Body of pancreas (tissue), 4 donors: ENCODE measurements at regions of chr11 and their contacts with region 1.

Region 1: DNA sequence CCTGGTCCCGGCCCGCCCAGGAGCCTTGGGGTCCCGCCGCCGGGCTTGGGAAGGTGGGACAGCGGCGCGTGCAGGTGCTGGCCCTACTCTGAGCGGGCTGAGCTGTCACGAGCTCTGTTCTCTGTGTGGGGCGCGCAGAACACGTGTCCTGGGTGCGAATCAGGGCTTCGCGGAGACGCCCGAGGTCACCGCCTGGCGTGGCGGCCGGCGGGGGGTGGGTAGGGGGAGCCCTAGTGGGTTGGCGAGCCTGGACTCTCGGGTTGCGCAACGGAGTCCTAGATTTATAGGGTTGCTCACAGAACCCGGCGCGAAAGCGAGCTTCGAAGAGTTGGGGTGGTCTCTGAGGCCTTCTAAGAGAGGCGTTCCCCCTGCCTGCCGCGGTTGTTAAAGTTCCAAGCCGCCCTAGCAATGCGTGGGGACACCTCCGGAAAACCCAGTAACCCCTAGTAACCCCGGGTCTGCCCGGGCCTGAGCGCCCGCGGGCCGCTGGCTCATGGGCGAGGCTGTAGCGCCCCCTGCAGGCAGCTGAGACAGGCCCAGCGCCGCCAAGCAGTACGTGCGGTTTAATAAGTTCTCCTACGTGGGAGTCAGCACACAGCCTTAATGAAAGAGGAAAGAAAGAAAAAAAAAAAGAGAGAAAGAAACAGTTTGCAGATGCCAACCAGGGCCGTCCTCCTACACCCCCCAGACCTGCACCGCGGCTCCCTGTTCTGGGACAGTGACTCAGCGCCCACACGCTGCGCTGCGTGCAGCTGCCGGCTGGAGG is 2.8 kb downstream of the ADM start:
- DNase-seq: peak; percentile 81 to 83 (median 83)
- ATAC-seq: peak; percentile 68
- H3K4me3 ChIP-seq: no peak overlapping the region
- H3K27ac ChIP-seq: peak overlapping the region; percentile 18 to 92 (median 67)
- H3K4me1 ChIP-seq: peaks cover 71% of the 10 kb centered on the region
- H3K27me3 ChIP-seq: peaks cover 0 to 6% of the 10 kb centered on the region in 2 donors
- CTCF ChIP-seq: peak; percentile 92 to 100 (median 98)
- POLR2A ChIP-seq: no peak

Region 2: DNA sequence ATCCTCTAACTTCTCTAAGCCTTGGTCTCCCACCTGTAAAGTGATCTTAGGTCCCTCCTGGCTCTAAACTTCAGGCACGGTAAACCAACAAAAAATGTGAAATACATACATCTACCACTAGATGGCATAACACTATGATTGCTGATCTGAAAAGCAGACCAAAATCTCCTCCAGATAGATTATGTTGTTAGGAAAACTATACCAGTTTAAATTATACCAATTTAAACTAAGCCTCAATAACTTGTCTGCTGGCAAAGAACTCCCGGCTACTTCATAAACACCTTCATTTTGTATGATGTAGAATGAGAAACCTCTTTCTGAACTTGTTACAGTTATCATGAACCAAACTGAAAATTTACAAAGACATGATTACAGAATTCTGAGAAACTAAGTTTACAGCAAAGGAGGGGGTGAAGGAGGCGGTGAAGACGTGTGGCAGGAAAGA is 99.5 kb before region 1 on chr11:
- intact Hi-C with region 1: loop called (anchors 5 kb)
- DNase-seq: no peak
- ATAC-seq: peak; percentile 35
- H3K4me3 ChIP-seq: no peak overlapping the region
- H3K27ac ChIP-seq: no peak overlapping the region
- H3K4me1 ChIP-seq: no peaks in the 10 kb centered on the region
- H3K27me3 ChIP-seq: no peaks in the 10 kb centered on the region
- CTCF ChIP-seq: peak; percentile 51 to 75 (median 66)
- POLR2A ChIP-seq: no peak